ENCODE measurements at regions of chr4 and their contacts with region 1.

Region 1: GRCh38 chr4:2418650-2419571 is at the start of gene CFAP99:
- DNase-seq: peak; percentile 93
- ATAC-seq: peak; percentile 88
- H3K4me3 ChIP-seq: peak within 1 kb of the TSS; percentile 71
- H3K27ac ChIP-seq: no peak within 1 kb of the TSS
- H3K4me1 ChIP-seq: peaks cover 12% of the 10 kb centered on the region
- H3K27me3 ChIP-seq: peaks cover 4% of the 10 kb centered on the region
- CTCF ChIP-seq: no peak
- total RNA-seq, gene CFAP99: 1.3 TPM in 1 of 2 replicates, not detected in the other

Region 2: GRCh38 chr4:2262143-2262943 is 156.6 kb before region 1 on chr4:
- CTCF ChIA-PET with region 1: no interaction called
- POLR2A ChIA-PET with region 1: no interaction called
- intact Hi-C with region 1: loop called (anchors 5 kb)
- DNase-seq: peak; percentile 95
- ATAC-seq: peak; percentile 92
- H3K4me3 ChIP-seq: peak overlapping the region; percentile 72
- H3K27ac ChIP-seq: no peak overlapping the region
- H3K4me1 ChIP-seq: peaks cover 8% of the 10 kb centered on the region; the same call in 1 of the 2 replicates
- H3K27me3 ChIP-seq: no peaks in the 10 kb centered on the region
- CTCF ChIP-seq: no peak

Region 3: DNA sequence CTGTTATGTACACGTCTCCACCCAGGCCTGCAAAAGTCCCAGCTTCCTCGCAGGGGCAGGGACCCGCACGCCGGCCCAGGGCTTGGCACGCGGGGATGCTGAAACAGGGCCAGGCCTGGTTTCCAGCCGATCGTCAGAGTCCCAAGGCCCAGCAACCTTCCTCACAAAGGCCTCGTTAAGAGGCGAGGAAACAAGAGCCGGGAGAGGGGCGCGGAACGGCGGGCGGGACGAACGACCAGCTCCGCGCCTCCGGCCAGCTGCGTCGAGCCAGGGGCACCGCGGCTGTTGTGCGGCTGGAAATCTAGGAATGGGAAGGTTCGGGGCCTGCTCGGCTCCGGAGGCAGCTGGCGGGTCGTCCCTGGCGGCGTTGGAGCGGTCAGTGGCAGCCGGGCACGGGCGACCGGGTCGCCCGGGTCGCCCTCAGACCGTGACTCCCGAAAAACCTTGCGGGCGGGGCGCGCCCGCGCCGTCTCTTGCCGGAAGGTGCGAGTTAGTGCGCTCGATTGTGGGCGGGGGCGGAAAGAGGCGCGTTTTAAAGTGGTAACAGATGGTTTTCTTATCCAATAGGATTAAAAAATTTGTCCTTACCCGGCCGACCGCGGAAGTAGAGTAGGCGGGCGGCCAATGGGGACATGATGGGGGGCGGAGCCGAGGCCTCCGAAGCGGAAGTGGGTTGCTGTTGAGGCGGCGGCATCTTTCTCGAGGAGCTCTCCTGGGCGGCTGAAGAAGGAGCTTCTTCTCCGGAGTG is 49.7 kb after region 1 on chr4 and contains the start of gene RNF4:
- CTCF ChIA-PET with region 1: no interaction called
- POLR2A ChIA-PET with region 1: no interaction called
- intact Hi-C with region 1: loop called (anchors 10 kb)
- DNase-seq: peak; percentile 92
- ATAC-seq: peak; percentile 84
- H3K4me3 ChIP-seq: peak within 1 kb of the TSS; percentile 100
- H3K27ac ChIP-seq: peak within 1 kb of the TSS; percentile 48
- H3K4me1 ChIP-seq: peaks cover 19% of the 10 kb centered on the region; the same call in 1 of the 2 replicates
- H3K27me3 ChIP-seq: no peaks in the 10 kb centered on the region
- CTCF ChIP-seq: no peak
- total RNA-seq, gene RNF4: 27.4 and 30.4 TPM in 2 replicates